Ovary (tissue), 10 donors: ENCODE measurements at regions of chr9 and their contacts with region 1.

Region 1: GRCh38 chr9:97501177-97501971 is at the start of gene TMOD1:
- DNase-seq: peak; percentile 76 to 84 (median 80)
- H3K4me3 ChIP-seq: peak within 1 kb of the TSS; percentile 93
- H3K27ac ChIP-seq: peak within 1 kb of the TSS; percentile 72 to 80
- H3K4me1 ChIP-seq: peaks cover 14% of the 10 kb centered on the region
- H3K27me3 ChIP-seq: no peaks in the 10 kb centered on the region
- CTCF ChIP-seq: no peak
- EP300 ChIP-seq: no peak
- POLR2A ChIP-seq: peak; percentile 8
- total RNA-seq, gene TMOD1: 37.1 to 76.9 (median 64.0) TPM

Region 2: GRCh38 chr9:97386733-97387503 is 114.5 kb before region 1 on chr9:
- intact Hi-C with region 1: no loop called
- DNase-seq: peak; percentile 49 to 76 (median 62)
- H3K4me3 ChIP-seq: no peak overlapping the region
- H3K27ac ChIP-seq: no peak overlapping the region
- H3K4me1 ChIP-seq: no peaks in the 10 kb centered on the region
- H3K27me3 ChIP-seq: no peaks in the 10 kb centered on the region
- CTCF ChIP-seq: peak; percentile 44 to 59 (median 50)
- EP300 ChIP-seq: no peak
- POLR2A ChIP-seq: no peak

Region 3: GRCh38 chr9:97559111-97559514 is 57.7 kb after region 1 on chr9:
- intact Hi-C with region 1: loop called in 3 of 4 experiments (anchors 2 to 5 kb)
- DNase-seq: no peak
- H3K4me3 ChIP-seq: no peak overlapping the region
- H3K27ac ChIP-seq: peak overlapping the region; percentile 17 to 84
- H3K4me1 ChIP-seq: peaks cover 45% of the 10 kb centered on the region
- H3K27me3 ChIP-seq: no peaks in the 10 kb centered on the region
- CTCF ChIP-seq: no peak
- EP300 ChIP-seq: no peak
- POLR2A ChIP-seq: no peak

Region 4: DNA sequence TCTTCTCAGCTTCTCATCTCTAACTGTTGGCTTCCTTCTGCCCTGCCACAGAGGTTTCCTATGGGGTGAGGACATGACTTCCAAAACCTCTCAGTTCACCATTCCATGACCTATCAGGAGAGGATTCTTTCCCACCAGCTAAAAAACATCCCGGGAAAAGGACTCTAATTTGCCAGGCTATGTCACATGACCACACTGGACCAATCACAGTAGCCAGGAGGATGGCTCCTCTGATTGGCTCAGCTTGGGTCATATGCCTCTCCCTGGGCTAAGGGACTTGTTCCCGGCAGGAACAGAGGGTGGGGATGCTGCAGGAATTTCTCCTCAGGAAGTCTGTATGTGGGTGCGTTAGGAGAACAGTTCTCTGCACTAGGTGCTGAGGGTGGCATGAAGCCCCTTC is 236.1 kb after region 1 on chr9:
- intact Hi-C with region 1: no loop called
- DNase-seq: no peak
- H3K4me3 ChIP-seq: no peak overlapping the region
- H3K27ac ChIP-seq: no peak overlapping the region
- H3K4me1 ChIP-seq: peaks cover 4% of the 10 kb centered on the region
- H3K27me3 ChIP-seq: no peaks in the 10 kb centered on the region
- CTCF ChIP-seq: no peak
- EP300 ChIP-seq: no peak
- POLR2A ChIP-seq: no peak